Activated CD4-positive, alpha-beta memory T cell treated with anti-CD3 and anti-CD28 coated beads, Interleukin-2, amount 10 ng/mL, durations not matched to agents 7 days and 5 days (primary cell): ENCODE measurements at regions of chr6 and their contacts with region 1.

Region 1: DNA sequence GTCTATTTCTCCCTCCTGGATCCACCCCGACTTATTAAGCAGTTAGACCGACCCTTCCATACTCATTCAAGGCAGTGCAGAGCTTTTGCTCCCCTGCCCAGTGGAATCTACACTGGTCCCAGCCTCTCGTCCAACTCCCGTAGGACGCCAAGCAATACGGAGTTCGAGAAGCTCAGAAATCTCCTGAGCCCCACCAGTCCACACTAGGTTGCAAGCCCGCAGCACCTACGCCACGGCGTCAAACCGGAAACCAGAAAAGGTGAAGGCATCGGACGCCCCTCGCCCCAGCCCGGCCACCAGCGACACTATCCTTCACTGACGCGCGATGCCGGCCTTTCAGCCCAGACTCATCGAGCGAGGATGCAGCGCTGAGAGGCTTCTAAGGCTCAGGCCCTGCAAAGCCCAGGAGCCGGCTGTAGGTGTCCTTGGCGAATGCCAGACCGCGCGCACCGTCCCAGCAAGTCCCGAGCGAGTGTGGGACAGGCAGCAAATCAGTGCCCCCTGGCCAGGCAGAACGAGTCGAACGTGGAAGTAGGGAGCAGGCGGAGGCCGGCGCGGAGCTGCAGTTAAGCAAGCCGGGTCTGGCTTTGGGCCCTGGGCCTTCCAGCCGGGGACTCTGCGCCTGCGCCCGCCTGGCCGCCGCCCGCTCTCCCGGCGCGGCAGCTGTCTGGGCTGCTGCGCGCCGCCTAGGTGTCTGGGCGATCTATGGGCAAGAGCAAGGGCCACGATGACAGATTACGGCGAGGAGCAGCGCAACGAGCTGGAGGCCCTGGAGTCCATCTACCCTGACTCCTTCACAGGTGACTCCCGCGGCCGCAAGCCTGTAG is at the start of gene RWDD1:
- DNase-seq: peak; percentile 99
- H3K4me3 Mint-ChIP-seq: peak within 1 kb of the TSS; percentile 92
- H3K27ac Mint-ChIP-seq: peak within 1 kb of the TSS; percentile 88
- H3K4me1 Mint-ChIP-seq: peaks cover 44% of the 10 kb centered on the region
- H3K27me3 Mint-ChIP-seq: peaks cover 8% of the 10 kb centered on the region
- total RNA-seq, gene RWDD1: 37.8 to 39.5 TPM

Region 2: DNA sequence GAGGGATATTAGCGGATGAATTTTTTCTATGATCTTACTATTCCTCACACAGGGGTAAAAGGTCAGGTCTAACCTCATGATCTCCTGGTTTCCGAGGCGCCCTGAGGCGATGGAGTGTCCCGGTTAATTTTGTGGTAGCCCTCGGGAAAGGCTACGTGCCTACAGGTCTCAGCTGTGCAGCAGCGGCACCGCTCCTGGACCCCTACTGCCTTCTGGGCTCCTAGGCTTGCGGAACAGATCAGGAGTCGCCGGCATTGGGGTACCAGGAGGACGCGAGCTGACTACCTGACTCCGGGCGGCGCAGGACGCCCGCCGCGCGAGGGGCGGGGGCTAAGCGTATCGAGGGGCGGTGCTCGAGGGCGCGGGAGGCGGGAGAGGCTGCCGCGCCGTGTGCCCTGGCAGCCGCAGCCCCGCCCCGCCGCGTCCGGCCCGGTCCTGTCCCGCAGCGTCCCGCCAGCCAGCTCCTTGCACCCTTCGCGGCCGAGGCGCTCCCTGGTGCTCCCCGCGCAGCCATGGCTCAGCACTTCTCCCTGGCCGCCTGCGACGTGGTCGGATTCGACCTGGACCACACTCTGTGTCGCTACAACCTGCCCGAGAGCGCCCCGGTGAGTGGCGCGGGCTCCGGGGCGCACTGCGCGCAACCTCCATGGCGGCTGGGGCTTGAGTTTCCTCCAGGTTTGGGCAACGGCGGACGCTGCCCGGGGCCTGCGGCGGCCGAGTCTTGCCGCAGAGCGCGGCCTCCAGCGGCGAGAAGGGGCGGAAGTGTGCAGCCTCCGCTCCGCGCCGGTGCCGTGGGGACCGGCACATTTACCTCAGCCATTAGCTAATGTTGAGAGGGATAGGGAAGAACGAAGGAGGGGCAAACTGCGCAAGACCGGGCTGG is 470.4 kb before region 1 on chr6 and contains the start of gene NT5DC1:
- CTCF ChIA-PET with region 1: no interaction called
- POLR2A ChIA-PET with region 1: interaction called, 13 read pairs
- DNase-seq: peak; percentile 88
- H3K4me3 Mint-ChIP-seq: peak within 1 kb of the TSS; percentile 94
- H3K27ac Mint-ChIP-seq: peak within 1 kb of the TSS; percentile 89
- H3K4me1 Mint-ChIP-seq: peaks cover 57% of the 10 kb centered on the region
- H3K27me3 Mint-ChIP-seq: no peaks in the 10 kb centered on the region
- total RNA-seq, gene NT5DC1: 48.3 to 49.4 TPM

Region 3: DNA sequence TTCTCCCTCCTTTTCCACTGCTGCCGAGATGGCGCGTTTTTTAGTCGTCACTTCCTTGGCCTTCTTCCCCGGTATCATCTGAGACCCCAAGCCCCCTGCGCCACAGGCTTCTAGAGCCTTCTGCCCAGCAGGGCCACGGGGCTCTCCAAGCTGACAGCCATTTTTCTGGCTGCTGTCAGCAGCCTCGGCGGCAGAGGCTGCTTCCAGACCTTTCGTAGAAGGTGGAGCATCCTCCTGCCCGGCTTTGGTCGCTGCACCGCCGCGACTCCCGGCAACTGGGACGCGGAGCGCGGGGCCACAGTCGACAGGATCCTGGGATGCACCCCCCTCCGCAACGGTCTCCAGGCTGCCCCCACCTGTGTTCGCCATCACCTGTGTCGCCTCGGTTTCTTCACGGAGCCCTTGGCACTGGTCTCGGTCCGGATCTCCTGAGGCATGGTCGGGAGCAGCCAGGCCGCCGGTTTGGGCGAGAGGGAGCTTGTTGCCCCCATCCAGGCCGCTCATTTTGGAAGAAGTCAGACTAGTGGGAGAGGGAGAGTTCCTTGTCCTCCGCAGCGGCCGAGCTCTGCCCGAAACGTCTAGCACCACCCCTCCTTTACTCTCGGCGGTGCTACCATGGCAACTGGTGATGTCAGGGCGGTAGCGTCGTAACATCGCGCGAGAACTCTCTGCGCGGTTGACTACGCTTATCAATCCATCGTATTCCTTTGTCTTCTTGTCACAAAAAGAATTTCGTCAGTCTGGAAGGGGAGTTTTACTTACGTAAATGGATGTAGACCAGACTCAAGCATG is 317.4 kb before region 1 on chr6 and contains the start of gene TSPYL4:
- CTCF ChIA-PET with region 1: interaction called, 5 read pairs
- POLR2A ChIA-PET with region 1: interaction called, 14 read pairs
- DNase-seq: peak; percentile 92
- H3K4me3 Mint-ChIP-seq: no peak within 1 kb of the TSS
- H3K27ac Mint-ChIP-seq: no peak within 1 kb of the TSS
- H3K4me1 Mint-ChIP-seq: peaks cover 17% of the 10 kb centered on the region
- H3K27me3 Mint-ChIP-seq: no peaks in the 10 kb centered on the region
- total RNA-seq, gene TSPYL4: 16.9 TPM

Region 4: DNA sequence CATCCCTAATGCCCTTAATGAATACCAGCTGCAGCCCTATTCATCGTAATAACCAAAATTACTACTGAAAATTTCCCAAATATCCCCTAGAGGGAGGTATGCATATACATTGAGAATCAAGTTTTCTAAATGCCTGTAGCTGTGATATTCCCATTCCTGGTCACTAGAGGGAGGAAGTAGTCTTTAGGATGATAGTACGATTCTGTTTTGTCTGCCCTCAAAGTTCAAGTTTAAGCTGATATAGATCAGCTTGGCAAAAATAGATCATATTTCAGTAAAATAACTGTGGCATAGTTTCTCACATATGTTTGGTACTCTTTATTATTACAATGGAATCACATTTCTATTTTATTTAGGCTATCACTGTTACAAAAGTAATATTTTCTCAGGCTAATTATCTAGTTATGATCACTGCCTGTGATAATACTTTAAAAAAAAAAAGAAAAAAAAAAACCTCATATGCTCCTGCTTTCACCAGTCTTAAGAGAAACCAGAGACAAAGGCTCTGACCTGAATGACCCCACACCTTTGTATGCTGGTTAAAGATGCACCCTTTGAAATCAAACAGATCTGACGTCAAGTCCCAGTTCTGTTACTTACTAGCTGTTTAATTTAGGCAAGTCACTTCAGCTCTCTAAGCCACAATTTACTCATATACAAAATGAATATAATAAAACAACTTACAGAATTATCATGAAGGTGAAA is 302.3 kb before region 1 on chr6:
- CTCF ChIA-PET with region 1: interaction called, 3 read pairs
- POLR2A ChIA-PET with region 1: interaction called, 10 read pairs
- DNase-seq: no peak
- H3K4me3 Mint-ChIP-seq: no peak overlapping the region
- H3K27ac Mint-ChIP-seq: no peak overlapping the region
- H3K4me1 Mint-ChIP-seq: peaks cover 7% of the 10 kb centered on the region
- H3K27me3 Mint-ChIP-seq: no peaks in the 10 kb centered on the region

Region 5: DNA sequence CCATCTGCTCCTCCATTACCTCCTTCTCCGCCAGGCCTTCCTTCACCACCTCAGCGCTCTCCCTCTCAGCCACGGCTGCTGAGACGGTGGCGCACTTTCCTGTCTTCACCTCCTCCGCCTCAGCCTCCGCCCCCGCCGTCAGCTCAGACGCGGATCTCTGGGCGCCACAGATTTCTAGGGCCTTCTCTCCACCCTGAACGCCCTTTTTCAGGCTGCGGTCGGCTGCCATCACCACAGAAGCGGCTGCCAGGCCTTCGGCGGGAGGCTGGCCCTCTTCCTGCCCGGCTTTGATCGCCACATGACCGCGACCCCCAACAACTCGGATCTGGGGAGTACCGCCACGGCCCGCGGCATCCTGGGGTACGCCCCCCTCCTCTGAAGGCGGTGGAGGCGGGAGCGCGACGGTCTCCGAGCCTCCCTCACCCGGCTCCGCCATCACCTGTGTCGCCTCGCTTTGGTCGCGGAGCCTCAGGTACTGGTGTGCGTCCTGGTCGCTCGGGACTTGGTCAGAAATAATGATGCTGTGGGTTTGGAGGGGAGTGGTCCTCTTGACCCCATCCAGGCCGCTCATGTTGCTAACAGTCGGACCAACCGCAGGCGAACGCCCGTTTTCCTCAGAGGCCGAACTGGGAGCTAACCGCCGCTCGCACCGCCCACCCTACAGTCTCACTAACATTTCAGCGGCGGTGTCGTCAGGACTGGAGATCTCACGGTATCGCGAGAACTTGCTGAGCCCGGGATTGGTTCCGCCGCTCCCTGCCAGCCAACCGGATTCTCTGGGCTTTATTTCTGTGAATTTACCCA is 291.6 kb before region 1 on chr6 and contains the start of gene TSPYL1:
- CTCF ChIA-PET with region 1: interaction called, 12 read pairs
- POLR2A ChIA-PET with region 1: interaction called, 55 read pairs
- DNase-seq: peak; percentile 96
- H3K4me3 Mint-ChIP-seq: peak within 1 kb of the TSS; percentile 99
- H3K27ac Mint-ChIP-seq: peak within 1 kb of the TSS; percentile 99
- H3K4me1 Mint-ChIP-seq: peaks cover 51% of the 10 kb centered on the region
- H3K27me3 Mint-ChIP-seq: no peaks in the 10 kb centered on the region
- total RNA-seq, gene TSPYL1: 47.6 to 48.4 TPM

Region 6: GRCh38 chr6:116444092-116444491 is 127.0 kb before region 1 on chr6:
- CTCF ChIA-PET with region 1: no interaction called
- POLR2A ChIA-PET with region 1: no interaction called
- DNase-seq: no peak
- H3K4me3 Mint-ChIP-seq: no peak overlapping the region
- H3K27ac Mint-ChIP-seq: no peak overlapping the region
- H3K4me1 Mint-ChIP-seq: peaks cover 29% of the 10 kb centered on the region
- H3K27me3 Mint-ChIP-seq: peaks cover 22% of the 10 kb centered on the region

Region 7: GRCh38 chr6:116667623-116668022 is 96.6 kb after region 1 on chr6:
- CTCF ChIA-PET with region 1: interaction called, 6 read pairs
- POLR2A ChIA-PET with region 1: interaction called, 28 read pairs
- DNase-seq: no peak
- H3K4me3 Mint-ChIP-seq: peak overlapping the region; percentile 91
- H3K27ac Mint-ChIP-seq: peak overlapping the region; percentile 90
- H3K4me1 Mint-ChIP-seq: peaks cover 42% of the 10 kb centered on the region
- H3K27me3 Mint-ChIP-seq: peaks cover 15% of the 10 kb centered on the region

Region 8: GRCh38 chr6:116680975-116681808 is 110.1 kb after region 1 on chr6 and contains the start of gene KPNA5:
- CTCF ChIA-PET with region 1: no interaction called
- POLR2A ChIA-PET with region 1: interaction called, 19 read pairs
- DNase-seq: peak; percentile 93
- H3K4me3 Mint-ChIP-seq: peak within 1 kb of the TSS; percentile 97
- H3K27ac Mint-ChIP-seq: peak within 1 kb of the TSS; percentile 98
- H3K4me1 Mint-ChIP-seq: peaks cover 22% of the 10 kb centered on the region
- H3K27me3 Mint-ChIP-seq: no peaks in the 10 kb centered on the region
- total RNA-seq, gene KPNA5: 7.1 to 9.9 TPM